MCF 10A (cell line): ENCODE measurements at regions of chr1 and their contacts with region 1.

Region 1: GRCh38 chr1:167936068-167936929 is at the start of gene DCAF6:
- DNase-seq: peak; percentile 100
- H3K4me3 Mint-ChIP-seq: peak within 1 kb of the TSS; percentile 81
- H3K27ac Mint-ChIP-seq: peak within 1 kb of the TSS; percentile 85
- H3K4me1 Mint-ChIP-seq: peaks cover 18% of the 10 kb centered on the region
- H3K27me3 Mint-ChIP-seq: no peaks in the 10 kb centered on the region
- CTCF ChIP-seq: no peak
- total RNA-seq, gene DCAF6: 57.2 and 60.8 TPM in 2 replicates

Region 2: GRCh38 chr1:167715157-167715999 is 220.9 kb before region 1 on chr1:
- CTCF ChIA-PET with region 1: interaction called, 4 read pairs
- POLR2A ChIA-PET with region 1: interaction called, 93 read pairs
- intact Hi-C with region 1: loop called (anchors 1 kb)
- DNase-seq: peak; percentile 97
- H3K4me3 Mint-ChIP-seq: peak overlapping the region; percentile 88
- H3K27ac Mint-ChIP-seq: peak overlapping the region; percentile 91
- H3K4me1 Mint-ChIP-seq: peaks cover 16% of the 10 kb centered on the region
- H3K27me3 Mint-ChIP-seq: no peaks in the 10 kb centered on the region
- CTCF ChIP-seq: peak; percentile 98

Region 3: GRCh38 chr1:167791281-167792187 is 144.8 kb before region 1 on chr1:
- CTCF ChIA-PET with region 1: interaction called, 5 read pairs
- POLR2A ChIA-PET with region 1: interaction called, 136 read pairs
- intact Hi-C with region 1: loop called (anchors 2 kb)
- DNase-seq: peak; percentile 64
- H3K4me3 Mint-ChIP-seq: peak overlapping the region; percentile 8
- H3K27ac Mint-ChIP-seq: peak overlapping the region; percentile 95
- H3K4me1 Mint-ChIP-seq: peaks cover 65% of the 10 kb centered on the region
- H3K27me3 Mint-ChIP-seq: no peaks in the 10 kb centered on the region
- CTCF ChIP-seq: no peak

Region 4: GRCh38 chr1:167819849-167820683 is 116.2 kb before region 1 on chr1:
- CTCF ChIA-PET with region 1: no interaction called
- POLR2A ChIA-PET with region 1: interaction called, 22 read pairs
- intact Hi-C with region 1: loop called (anchors 1 kb)
- DNase-seq: peak; percentile 90
- H3K4me3 Mint-ChIP-seq: peak overlapping the region; percentile 69
- H3K27ac Mint-ChIP-seq: peak overlapping the region; percentile 74
- H3K4me1 Mint-ChIP-seq: peaks cover 25% of the 10 kb centered on the region
- H3K27me3 Mint-ChIP-seq: no peaks in the 10 kb centered on the region
- CTCF ChIP-seq: no peak

Region 5: DNA sequence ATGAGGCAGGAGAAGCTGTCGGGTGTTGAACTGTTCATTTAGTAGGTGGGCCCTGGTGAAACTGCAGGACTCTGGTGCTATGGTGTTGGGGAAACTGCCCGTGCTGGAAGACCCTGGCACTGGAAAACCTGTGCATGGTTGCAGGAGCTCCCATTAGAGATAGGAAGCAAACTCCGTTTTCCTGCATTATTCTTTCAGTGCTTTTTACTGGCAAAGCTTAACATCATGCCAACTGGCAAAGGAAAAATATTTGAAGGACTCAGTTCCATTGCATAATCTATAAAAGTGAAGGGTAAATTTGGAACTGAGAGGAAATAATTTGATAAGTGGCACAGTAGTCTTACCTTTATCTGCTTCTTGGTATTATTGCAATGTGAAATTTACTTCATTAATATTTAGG is 32.3 kb after region 1 on chr1:
- CTCF ChIA-PET with region 1: no interaction called
- POLR2A ChIA-PET with region 1: interaction called, 25 read pairs
- intact Hi-C with region 1: no loop called
- DNase-seq: no peak
- H3K4me3 Mint-ChIP-seq: no peak overlapping the region
- H3K27ac Mint-ChIP-seq: no peak overlapping the region
- H3K4me1 Mint-ChIP-seq: peaks cover 14% of the 10 kb centered on the region
- H3K27me3 Mint-ChIP-seq: no peaks in the 10 kb centered on the region
- CTCF ChIP-seq: no peak